ENCODE measurements at regions of chr17 and their contacts with region 1.

Region 1: GRCh38 chr17:27353461-27354050 is 59.6 kb downstream of the WSB1 start:
- DNase-seq: peak; percentile 97
- H3K4me3 ChIP-seq: peak overlapping the region in 1 of 3 experiments; percentile 20
- H3K27ac ChIP-seq: peak overlapping the region; percentile 99
- H3K4me1 ChIP-seq: peaks cover 40% of the 10 kb centered on the region
- H3K27me3 ChIP-seq: no peaks in the 10 kb centered on the region
- CTCF ChIP-seq: peak; percentile 61 to 99
- POLR2A ChIP-seq: peak; percentile 47

Region 2: DNA sequence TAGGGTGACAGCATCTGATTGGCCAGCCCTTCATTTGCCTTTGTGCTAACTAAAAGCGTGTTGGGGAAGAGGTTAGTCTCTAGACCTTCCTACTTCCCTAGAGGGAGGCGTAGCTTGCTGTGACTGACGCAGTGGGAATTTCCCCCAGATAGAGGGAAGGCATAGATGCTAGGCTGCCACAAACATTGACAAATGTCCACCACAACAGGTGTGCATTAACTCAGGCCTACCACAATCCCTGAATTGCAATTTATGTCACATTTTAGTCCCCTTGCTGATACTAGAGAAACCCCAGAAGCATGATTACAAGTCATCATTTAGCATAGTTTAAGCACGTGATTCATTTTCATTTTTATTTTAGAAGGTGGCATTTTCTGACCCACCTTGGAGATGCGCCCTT is 135.9 kb before region 1 on chr17:
- CTCF ChIA-PET with region 1: no interaction called
- POLR2A ChIA-PET with region 1: no interaction called
- dilution Hi-C with region 1: no loop called
- intact Hi-C with region 1: no loop called
- DNase-seq: no peak
- H3K4me3 ChIP-seq: no peak overlapping the region
- H3K27ac ChIP-seq: no peak overlapping the region
- H3K4me1 ChIP-seq: no peaks in the 10 kb centered on the region
- H3K27me3 ChIP-seq: no peaks in the 10 kb centered on the region
- CTCF ChIP-seq: no peak
- POLR2A ChIP-seq: no peak

Region 3: GRCh38 chr17:27256225-27257030 is 97.1 kb before region 1 on chr17:
- CTCF ChIA-PET with region 1: no interaction called
- POLR2A ChIA-PET with region 1: no interaction called
- dilution Hi-C with region 1: no loop called
- intact Hi-C with region 1: no loop called
- DNase-seq: peak; percentile 93
- H3K4me3 ChIP-seq: no peak overlapping the region
- H3K27ac ChIP-seq: peak overlapping the region; percentile 63
- H3K4me1 ChIP-seq: peaks cover 16% of the 10 kb centered on the region
- H3K27me3 ChIP-seq: no peaks in the 10 kb centered on the region
- CTCF ChIP-seq: no peak
- POLR2A ChIP-seq: no peak

Region 4: DNA sequence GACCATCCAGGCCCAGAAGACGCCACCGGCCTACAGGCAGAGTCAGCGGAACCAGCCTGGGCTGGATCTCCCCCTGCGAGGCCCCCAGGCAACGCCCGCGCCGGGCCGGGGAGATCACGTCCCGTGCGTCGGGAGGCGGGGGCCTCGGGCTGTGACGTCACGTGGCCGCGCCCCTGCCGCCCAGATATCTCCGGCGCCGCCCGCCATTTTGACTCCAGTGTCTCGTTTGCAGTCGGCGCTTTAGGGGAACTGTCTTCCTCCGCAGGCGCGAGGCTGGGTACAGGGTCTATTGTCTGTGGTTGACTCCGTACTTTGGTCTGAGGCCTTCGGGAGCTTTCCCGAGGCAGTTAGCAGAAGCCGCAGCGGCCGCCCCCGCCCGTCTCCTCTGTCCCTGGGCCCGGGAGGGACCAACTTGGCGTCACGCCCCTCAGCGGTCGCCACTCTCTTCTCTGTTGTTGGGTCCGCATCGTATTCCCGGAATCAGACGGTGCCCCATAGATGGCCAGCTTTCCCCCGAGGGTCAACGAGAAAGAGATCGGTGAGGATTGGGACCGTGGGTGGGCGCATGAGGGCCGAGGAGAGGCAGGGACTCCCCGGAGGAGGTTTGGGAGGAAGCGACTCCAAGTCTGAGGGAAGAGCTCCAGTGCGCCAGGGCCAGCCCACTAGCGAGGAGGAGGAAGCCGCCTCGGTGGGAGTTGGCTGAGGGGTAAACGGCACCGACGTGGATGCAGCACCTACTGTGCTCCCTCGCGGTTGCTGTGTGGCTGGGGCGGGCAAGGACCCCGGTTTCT is 59.5 kb before region 1 on chr17 and contains the start of gene WSB1:
- CTCF ChIA-PET with region 1: interaction called, 4 read pairs
- POLR2A ChIA-PET with region 1: interaction called, 3 read pairs
- dilution Hi-C with region 1: no loop called
- intact Hi-C with region 1: loop called (anchors 2 kb)
- DNase-seq: peak; percentile 90
- H3K4me3 ChIP-seq: peak within 1 kb of the TSS; percentile 45 to 96 (median 86)
- H3K27ac ChIP-seq: peak within 1 kb of the TSS; percentile 94
- H3K4me1 ChIP-seq: peaks cover 14% of the 10 kb centered on the region
- H3K27me3 ChIP-seq: no peaks in the 10 kb centered on the region
- CTCF ChIP-seq: no peak
- POLR2A ChIP-seq: peak; percentile 99
- total RNA-seq, gene WSB1: 334 and 471 TPM in 2 replicates

Region 5: GRCh38 chr17:27381007-27381501 is 27.5 kb after region 1 on chr17:
- CTCF ChIA-PET with region 1: interaction called, 43 read pairs
- POLR2A ChIA-PET with region 1: interaction called, 3 read pairs
- dilution Hi-C with region 1: no loop called
- intact Hi-C with region 1: loop called (anchors 1 kb)
- DNase-seq: peak; percentile 51
- H3K4me3 ChIP-seq: no peak overlapping the region
- H3K27ac ChIP-seq: peak overlapping the region; percentile 77
- H3K4me1 ChIP-seq: peaks cover 45% of the 10 kb centered on the region
- H3K27me3 ChIP-seq: no peaks in the 10 kb centered on the region
- CTCF ChIP-seq: peak; percentile 94 to 95
- POLR2A ChIP-seq: no peak

Region 6: DNA sequence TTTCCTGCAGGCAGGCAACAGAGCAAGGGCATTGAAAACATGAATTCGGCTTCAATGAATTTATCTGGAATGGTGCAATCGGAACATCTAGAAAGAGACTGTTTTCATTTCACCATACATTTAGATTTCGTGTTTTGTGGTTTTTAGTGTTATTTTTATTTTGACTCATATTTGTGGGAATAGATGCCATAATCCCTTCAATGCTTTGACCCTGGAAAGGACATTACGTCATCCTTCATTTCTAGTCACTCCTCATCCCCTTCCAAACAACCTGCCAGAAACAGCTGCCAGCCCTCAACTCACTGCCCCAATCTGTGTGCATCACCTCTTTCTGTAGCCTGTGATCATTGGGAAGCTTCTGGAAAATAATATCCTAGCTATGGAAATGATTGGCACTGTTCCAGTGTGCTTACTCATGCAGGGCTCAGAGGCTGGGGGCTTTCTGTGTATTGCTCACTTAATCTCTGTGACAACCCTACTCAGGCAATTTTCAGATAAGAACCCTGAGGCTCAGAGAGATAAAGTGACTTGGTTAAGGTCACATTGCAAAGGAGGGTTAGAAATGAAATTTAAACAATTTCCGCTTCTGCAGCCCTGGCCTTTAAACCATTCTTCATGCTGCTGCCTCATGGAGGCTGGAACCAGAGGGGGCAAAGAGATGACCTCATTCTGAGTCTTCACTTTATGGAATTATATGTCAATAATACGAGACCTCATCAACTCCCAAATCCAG is 93.2 kb after region 1 on chr17:
- CTCF ChIA-PET with region 1: interaction called, 10 read pairs
- POLR2A ChIA-PET with region 1: no interaction called
- dilution Hi-C with region 1: no loop called
- intact Hi-C with region 1: loop called (anchors 1 kb)
- DNase-seq: peak; percentile 97
- H3K4me3 ChIP-seq: no peak overlapping the region
- H3K27ac ChIP-seq: peak overlapping the region; percentile 75
- H3K4me1 ChIP-seq: peaks cover 23% of the 10 kb centered on the region
- H3K27me3 ChIP-seq: no peaks in the 10 kb centered on the region
- CTCF ChIP-seq: no peak
- POLR2A ChIP-seq: no peak

Region 7: GRCh38 chr17:27654654-27655524 is 301.3 kb after region 1 on chr17:
- CTCF ChIA-PET with region 1: interaction called, 5 read pairs
- POLR2A ChIA-PET with region 1: no interaction called
- dilution Hi-C with region 1: no loop called
- intact Hi-C with region 1: loop called (anchors 5 kb)
- DNase-seq: peak; percentile 66
- H3K4me3 ChIP-seq: no peak overlapping the region
- H3K27ac ChIP-seq: no peak overlapping the region
- H3K4me1 ChIP-seq: no peaks in the 10 kb centered on the region
- H3K27me3 ChIP-seq: no peaks in the 10 kb centered on the region
- CTCF ChIP-seq: peak; percentile 77 to 91
- POLR2A ChIP-seq: no peak